ENCODE measurements at regions of chr17 and their contacts with region 1.

Region 1: DNA sequence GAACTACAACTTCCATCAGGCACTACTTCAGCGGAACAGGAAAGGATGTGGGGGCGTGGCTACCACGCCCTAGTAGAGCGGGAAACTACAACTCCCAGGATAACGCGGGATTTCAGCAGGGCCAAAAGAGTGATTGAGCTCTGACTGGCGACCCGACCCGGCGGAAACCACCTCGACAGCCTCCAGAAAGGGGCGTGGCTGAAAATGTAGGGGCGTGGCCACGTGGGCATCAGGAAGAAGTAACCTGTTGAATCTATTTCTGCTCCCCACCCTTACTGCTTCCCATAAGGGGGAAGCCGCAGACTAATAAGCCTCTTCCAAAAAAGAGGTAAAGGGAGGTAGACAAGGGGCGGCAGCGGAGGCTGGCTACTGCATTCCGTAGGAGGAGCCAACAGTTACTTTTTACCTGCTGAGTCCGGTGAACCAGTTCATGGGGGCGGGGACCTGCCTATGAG is at the start of gene TMEM102:
- DNase-seq: peak; percentile 99
- ATAC-seq: peak; percentile 73
- H3K4me3 Mint-ChIP-seq: peak within 1 kb of the TSS; percentile 95
- H3K27ac Mint-ChIP-seq: peak within 1 kb of the TSS; percentile 98
- H3K4me1 Mint-ChIP-seq: peaks cover 38% of the 10 kb centered on the region
- H3K27me3 Mint-ChIP-seq: peaks cover 10% of the 10 kb centered on the region
- total RNA-seq, gene TMEM102: 16.5 to 18.1 TPM

Region 2: GRCh38 chr17:7329374-7329996 is 105.8 kb before region 1 on chr17:
- CTCF ChIA-PET with region 1: interaction called, 19 read pairs
- POLR2A ChIA-PET with region 1: interaction called, 5 read pairs
- DNase-seq: peak; percentile 98
- ATAC-seq: peak; percentile 63
- H3K4me3 Mint-ChIP-seq: peak overlapping the region; percentile 87
- H3K27ac Mint-ChIP-seq: peak overlapping the region; percentile 98
- H3K4me1 Mint-ChIP-seq: peaks cover 54% of the 10 kb centered on the region
- H3K27me3 Mint-ChIP-seq: no peaks in the 10 kb centered on the region

Region 3: DNA sequence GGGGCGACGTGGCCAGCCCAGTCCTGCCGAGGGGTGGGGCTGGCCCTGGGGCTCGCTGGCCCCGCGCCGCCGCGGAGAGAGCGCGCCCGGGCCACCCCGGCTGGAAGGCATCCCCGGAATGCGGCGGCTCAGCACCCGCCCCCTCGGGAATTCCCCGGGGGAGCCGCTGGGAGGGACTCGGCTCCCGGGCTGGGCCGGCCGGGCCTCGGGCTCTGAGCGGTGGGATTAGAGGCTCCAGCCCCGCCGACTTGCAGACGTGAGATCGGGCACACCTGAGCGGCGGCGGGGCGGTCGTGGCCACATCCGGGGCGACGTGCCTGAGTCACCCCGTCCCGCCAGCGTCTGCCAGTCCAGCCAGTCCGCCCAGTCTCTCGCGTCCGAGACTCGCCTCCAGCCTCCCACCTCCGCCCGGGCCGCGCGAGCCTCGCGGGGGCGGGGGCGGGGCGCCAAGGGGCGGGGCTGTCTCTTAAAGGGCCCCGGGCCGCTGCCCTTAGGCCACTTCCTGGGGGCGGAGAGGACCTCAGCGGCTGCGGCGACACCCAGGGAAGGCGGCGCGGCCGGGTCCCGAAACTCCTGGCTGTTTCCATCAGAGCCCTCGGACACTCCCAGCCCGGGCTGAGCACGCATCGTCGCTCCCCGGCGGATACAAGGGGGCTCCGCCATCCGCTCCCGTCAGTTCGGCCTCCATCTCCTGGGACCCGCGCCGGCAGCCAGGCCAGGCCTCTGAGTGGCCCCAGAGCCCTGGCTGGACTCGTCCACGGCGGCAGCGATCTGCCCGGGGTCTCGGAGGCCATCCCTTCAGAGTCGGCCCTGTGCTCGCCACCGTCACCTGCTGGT is 83.4 kb before region 1 on chr17 and contains the start of gene KCTD11:
- CTCF ChIA-PET with region 1: interaction called, 83 read pairs
- POLR2A ChIA-PET with region 1: interaction called, 4 read pairs
- DNase-seq: peak; percentile 87
- ATAC-seq: peak; percentile 63
- H3K4me3 Mint-ChIP-seq: peak within 1 kb of the TSS; percentile 76
- H3K27ac Mint-ChIP-seq: peak within 1 kb of the TSS; percentile 81
- H3K4me1 Mint-ChIP-seq: peaks cover 80% of the 10 kb centered on the region
- H3K27me3 Mint-ChIP-seq: no peaks in the 10 kb centered on the region
- total RNA-seq, gene KCTD11: 11.4 to 11.8 TPM

Region 4: DNA sequence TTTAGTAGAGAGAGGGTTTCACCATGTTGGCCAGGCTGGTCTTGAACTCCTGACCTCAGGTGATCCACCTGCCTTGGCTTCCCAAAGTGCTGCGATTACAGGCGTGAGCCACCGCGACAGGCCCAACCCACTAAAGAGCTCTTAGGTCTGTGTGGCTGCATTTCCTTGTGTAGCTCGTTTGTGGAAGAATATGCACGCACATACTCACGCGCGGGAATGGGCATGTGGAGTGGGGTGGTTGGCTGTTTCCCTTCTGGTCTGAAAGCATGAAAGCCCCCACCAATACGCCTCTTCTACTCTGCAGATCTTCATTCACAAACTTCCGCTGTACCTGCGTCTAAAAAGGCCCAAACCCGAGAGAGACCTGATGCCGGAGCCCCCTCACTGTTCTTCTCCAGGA is 19.7 kb after region 1 on chr17:
- CTCF ChIA-PET with region 1: interaction called, 58 read pairs
- POLR2A ChIA-PET with region 1: interaction called, 20 read pairs
- DNase-seq: no peak
- ATAC-seq: no peak
- H3K4me3 Mint-ChIP-seq: peak overlapping the region; percentile 90
- H3K27ac Mint-ChIP-seq: peak overlapping the region; percentile 98
- H3K4me1 Mint-ChIP-seq: peaks cover 32% of the 10 kb centered on the region
- H3K27me3 Mint-ChIP-seq: no peaks in the 10 kb centered on the region

Region 5: GRCh38 chr17:7496470-7497183 is 61.4 kb after region 1 on chr17:
- CTCF ChIA-PET with region 1: interaction called, 12 read pairs
- POLR2A ChIA-PET with region 1: no interaction called
- DNase-seq: no peak
- ATAC-seq: peak; percentile 17
- H3K4me3 Mint-ChIP-seq: no peak overlapping the region
- H3K27ac Mint-ChIP-seq: no peak overlapping the region
- H3K4me1 Mint-ChIP-seq: peaks cover 23% of the 10 kb centered on the region
- H3K27me3 Mint-ChIP-seq: no peaks in the 10 kb centered on the region

Region 6: DNA sequence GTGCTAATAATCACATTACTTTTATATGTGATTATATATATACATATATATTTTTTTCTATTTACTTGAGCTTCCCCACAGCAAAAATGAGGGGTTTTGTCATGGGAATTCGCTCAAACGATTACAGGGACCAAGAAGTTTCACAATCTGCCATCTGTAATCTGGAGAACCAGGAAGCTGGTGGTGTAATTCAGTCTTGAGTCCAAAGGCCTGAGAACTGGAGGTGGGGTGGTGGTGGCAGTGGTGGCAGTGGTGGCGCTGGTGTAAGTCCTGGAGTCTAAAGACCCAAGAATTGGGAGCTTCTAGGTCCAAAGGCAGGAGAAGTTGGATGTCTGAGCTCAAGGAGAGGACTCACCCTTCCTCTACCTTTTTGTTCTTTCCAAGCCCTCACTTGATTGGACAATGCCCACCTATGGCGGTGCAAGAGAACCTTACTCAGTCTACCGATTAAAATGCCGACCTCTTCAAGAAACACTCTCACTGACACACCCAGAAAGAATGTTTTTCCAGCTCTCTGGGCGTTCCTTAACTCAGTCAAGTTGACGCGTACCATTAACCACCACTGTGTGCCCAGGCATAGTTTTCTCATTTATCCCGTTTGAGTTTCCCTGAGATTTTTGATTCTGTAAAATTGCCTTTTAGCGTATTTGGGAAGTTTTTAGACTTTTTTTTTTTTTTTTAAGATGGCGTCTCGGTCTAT is 80.8 kb after region 1 on chr17:
- CTCF ChIA-PET with region 1: interaction called, 29 read pairs
- POLR2A ChIA-PET with region 1: no interaction called
- DNase-seq: no peak
- ATAC-seq: no peak
- H3K4me3 Mint-ChIP-seq: no peak overlapping the region
- H3K27ac Mint-ChIP-seq: no peak overlapping the region
- H3K4me1 Mint-ChIP-seq: peaks cover 4% of the 10 kb centered on the region
- H3K27me3 Mint-ChIP-seq: no peaks in the 10 kb centered on the region

Region 7: GRCh38 chr17:7589204-7589868 is 154.1 kb after region 1 on chr17:
- CTCF ChIA-PET with region 1: interaction called, 14 read pairs
- POLR2A ChIA-PET with region 1: interaction called, 6 read pairs
- DNase-seq: peak; percentile 74
- ATAC-seq: peak; percentile 75
- H3K4me3 Mint-ChIP-seq: no peak overlapping the region
- H3K27ac Mint-ChIP-seq: no peak overlapping the region
- H3K4me1 Mint-ChIP-seq: peaks cover 20% of the 10 kb centered on the region
- H3K27me3 Mint-ChIP-seq: no peaks in the 10 kb centered on the region

Measured in activated CD8-positive, alpha-beta T cell treated with anti-CD3 and anti-CD28 coated beads, Interleukin-2, amount 10 ng/mL, durations not matched to agents 7 days and 5 days (primary cell).